Caco-2 (cell line): ENCODE measurements at regions of chr1 and their contacts with region 1.

Region 1: DNA sequence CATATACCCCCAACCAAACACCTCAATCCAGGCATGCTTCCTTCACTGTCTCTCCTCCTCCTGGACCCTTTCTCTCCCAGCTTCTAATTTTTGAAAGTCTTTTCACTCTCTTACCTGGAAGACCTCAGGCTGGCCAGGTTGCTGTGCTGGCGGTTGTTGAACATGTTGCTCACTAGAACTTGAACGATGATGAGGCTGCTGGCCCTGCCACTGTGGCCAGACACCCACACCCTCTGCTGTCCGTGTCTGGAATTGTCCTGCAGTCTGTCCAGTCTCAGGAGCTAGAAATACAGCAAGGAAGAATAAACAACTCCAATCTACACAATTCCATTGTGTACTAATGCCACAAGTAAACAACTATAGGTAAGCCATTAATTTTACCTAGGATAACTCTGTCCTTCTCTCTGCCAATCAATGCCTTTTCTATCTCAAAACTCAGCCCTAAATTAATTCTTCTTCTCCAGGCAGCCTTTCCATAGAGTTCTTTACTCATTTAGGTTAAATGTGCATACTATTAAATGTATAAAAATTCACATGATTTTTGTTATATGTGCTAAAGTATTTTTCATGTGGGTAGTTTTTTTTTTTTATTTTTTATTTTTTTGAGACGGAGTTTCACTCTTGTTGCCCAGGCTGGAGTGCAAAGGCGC is 5.1 kb upstream of the CTSK start:
- DNase-seq: peak; percentile 70 to 79
- H3K4me3 ChIP-seq: no peak overlapping the region
- H3K4me3 Mint-ChIP-seq: no peak overlapping the region
- H3K27ac Mint-ChIP-seq: no peak overlapping the region
- H3K4me1 ChIP-seq: peaks cover 27% of the 10 kb centered on the region
- H3K4me1 Mint-ChIP-seq: no peaks in the 10 kb centered on the region
- H3K27me3 ChIP-seq: no peaks in the 10 kb centered on the region
- H3K27me3 Mint-ChIP-seq: no peaks in the 10 kb centered on the region
- CTCF ChIP-seq: peak; percentile 63 to 82

Region 2: DNA sequence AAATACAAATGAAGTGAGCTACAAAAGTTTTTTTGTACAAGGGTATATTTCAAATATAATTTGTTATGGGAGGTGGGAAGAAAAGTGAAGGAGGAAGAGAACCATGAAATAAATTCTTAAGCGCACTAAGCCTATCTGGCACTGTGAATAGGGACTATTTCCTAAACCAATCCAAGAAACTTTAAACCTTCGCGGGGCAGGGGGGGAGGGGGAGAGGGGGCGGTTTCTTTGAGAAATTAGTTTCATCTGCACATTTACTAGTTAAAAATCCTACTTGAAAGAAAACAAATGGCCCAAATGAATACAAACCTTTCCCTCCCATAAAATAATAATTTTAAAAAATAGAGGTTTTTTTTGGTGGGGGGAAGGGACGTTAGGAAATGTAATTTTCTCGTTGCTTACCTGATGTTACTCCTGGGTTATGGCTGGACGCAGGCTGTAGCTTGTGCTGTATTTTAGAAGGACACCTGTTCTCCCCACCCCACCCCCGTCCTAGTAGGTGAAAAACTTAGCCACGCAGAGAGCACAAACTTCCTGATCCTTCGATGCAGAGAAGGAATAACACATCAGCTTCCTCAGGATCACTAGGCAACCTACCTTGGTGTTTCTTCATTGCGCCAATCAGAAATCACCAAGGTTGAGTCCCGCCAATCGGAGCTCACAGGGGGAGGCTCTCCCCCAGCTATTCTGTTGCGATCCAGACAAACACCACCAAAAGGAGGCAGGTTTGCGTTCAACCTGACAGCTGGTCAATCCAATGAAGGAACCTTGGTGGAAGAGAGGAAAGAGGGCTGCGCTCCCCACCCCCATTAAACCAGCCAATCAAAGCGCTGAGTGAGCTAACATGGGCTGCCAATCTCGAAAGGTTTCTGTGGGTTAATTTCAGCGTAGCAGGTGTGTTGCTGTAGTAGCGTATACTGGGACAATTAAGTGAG is 116.3 kb before region 1 on chr1 and contains the start of gene GOLPH3L:
- CTCF ChIA-PET with region 1: interaction called, 14 read pairs
- POLR2A ChIA-PET with region 1: interaction called, 3 read pairs
- intact Hi-C with region 1: loop called (anchors 5 kb)
- DNase-seq: peak; percentile 96 to 98
- H3K4me3 ChIP-seq: peak within 1 kb of the TSS; percentile 65
- H3K4me3 Mint-ChIP-seq: peak within 1 kb of the TSS; percentile 98
- H3K27ac Mint-ChIP-seq: peak within 1 kb of the TSS; percentile 97
- H3K4me1 ChIP-seq: no peaks in the 10 kb centered on the region; the same call in 1 of the 2 replicates
- H3K4me1 Mint-ChIP-seq: peaks cover 7% of the 10 kb centered on the region
- H3K27me3 ChIP-seq: no peaks in the 10 kb centered on the region
- H3K27me3 Mint-ChIP-seq: no peaks in the 10 kb centered on the region
- CTCF ChIP-seq: no peak
- total RNA-seq, gene GOLPH3L: 13.3 and 14.7 TPM in 2 replicates

Region 3: DNA sequence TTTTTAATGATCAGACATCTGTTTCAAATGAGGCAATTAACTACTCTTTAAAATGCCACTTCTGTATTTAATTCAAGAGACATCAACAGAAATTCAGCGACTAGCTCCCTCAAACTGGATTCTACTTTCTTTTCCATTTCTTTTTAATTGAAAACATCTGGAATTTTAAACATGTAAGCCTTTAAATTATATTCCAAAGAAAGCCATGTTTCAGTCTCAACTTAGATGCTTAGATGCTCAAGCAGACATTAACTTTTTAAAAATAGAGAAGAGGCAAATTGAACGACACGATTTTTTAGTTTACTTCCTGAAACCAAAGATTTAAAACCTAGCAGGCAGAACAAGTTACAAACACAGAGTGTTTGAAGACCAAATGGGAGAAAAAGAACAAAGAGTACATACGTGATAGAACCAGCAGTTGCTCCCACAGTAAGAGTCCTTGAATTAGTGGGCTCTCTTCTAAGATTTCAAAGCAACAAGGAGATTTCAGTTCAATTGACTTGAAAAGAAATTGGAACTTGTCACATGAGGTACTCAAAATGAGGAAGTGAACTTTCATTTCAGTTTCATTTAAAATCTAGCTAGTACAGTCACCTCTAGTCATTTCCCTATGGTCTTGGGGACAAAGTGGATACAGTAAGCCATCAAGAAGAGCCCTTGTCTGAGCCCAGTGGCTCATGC is 47.7 kb before region 1 on chr1 and contains the start of gene CTSS:
- CTCF ChIA-PET with region 1: no interaction called
- POLR2A ChIA-PET with region 1: no interaction called
- intact Hi-C with region 1: loop called (anchors 5 kb)
- DNase-seq: no peak
- H3K4me3 ChIP-seq: no peak within 1 kb of the TSS
- H3K4me3 Mint-ChIP-seq: peak within 1 kb of the TSS; percentile 5
- H3K27ac Mint-ChIP-seq: no peak within 1 kb of the TSS
- H3K4me1 ChIP-seq: no peaks in the 10 kb centered on the region
- H3K4me1 Mint-ChIP-seq: no peaks in the 10 kb centered on the region
- H3K27me3 ChIP-seq: no peaks in the 10 kb centered on the region
- H3K27me3 Mint-ChIP-seq: no peaks in the 10 kb centered on the region
- CTCF ChIP-seq: no peak
- total RNA-seq, gene CTSS: 0.84 and 1.3 TPM in 2 replicates

Region 4: GRCh38 chr1:150836129-150836773 is 23.1 kb after region 1 on chr1:
- CTCF ChIA-PET with region 1: no interaction called
- POLR2A ChIA-PET with region 1: no interaction called
- intact Hi-C with region 1: no loop called
- DNase-seq: no peak
- H3K4me3 ChIP-seq: no peak overlapping the region
- H3K4me3 Mint-ChIP-seq: no peak overlapping the region
- H3K27ac Mint-ChIP-seq: no peak overlapping the region
- H3K4me1 ChIP-seq: no peaks in the 10 kb centered on the region; the same call in 1 of the 2 replicates
- H3K4me1 Mint-ChIP-seq: peaks cover 7% of the 10 kb centered on the region
- H3K27me3 ChIP-seq: no peaks in the 10 kb centered on the region
- H3K27me3 Mint-ChIP-seq: no peaks in the 10 kb centered on the region
- CTCF ChIP-seq: no peak

Region 5: DNA sequence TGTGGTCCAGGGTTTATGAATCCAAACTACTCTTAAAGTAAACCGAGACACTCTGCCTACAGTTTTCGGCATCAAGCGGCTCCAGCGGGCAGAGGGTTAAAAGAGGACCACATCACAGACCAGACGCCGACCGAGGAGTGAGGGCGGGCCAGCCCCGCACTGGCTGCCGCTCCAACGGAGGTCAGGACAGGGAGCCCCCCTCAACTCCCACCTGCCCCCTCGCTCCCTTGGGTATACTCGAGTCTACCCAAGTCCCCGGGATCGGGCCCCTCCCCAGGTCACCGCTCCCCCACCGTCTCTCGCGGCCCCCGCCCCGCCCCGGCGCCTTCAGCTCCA is 62.9 kb after region 1 on chr1:
- CTCF ChIA-PET with region 1: no interaction called
- POLR2A ChIA-PET with region 1: no interaction called
- intact Hi-C with region 1: loop called (anchors 2 kb)
- DNase-seq: no peak
- H3K4me3 ChIP-seq: peak overlapping the region; percentile 83
- H3K4me3 Mint-ChIP-seq: peak overlapping the region; percentile 81
- H3K27ac Mint-ChIP-seq: peak overlapping the region; percentile 86
- H3K4me1 ChIP-seq: peaks cover 12% of the 10 kb centered on the region; the same call in 1 of the 2 replicates
- H3K4me1 Mint-ChIP-seq: peaks cover 7% of the 10 kb centered on the region
- H3K27me3 ChIP-seq: no peaks in the 10 kb centered on the region
- H3K27me3 Mint-ChIP-seq: no peaks in the 10 kb centered on the region
- CTCF ChIP-seq: no peak